A673 (cell line): ENCODE measurements at regions of chr3 and their contacts with region 1.

Region 1: DNA sequence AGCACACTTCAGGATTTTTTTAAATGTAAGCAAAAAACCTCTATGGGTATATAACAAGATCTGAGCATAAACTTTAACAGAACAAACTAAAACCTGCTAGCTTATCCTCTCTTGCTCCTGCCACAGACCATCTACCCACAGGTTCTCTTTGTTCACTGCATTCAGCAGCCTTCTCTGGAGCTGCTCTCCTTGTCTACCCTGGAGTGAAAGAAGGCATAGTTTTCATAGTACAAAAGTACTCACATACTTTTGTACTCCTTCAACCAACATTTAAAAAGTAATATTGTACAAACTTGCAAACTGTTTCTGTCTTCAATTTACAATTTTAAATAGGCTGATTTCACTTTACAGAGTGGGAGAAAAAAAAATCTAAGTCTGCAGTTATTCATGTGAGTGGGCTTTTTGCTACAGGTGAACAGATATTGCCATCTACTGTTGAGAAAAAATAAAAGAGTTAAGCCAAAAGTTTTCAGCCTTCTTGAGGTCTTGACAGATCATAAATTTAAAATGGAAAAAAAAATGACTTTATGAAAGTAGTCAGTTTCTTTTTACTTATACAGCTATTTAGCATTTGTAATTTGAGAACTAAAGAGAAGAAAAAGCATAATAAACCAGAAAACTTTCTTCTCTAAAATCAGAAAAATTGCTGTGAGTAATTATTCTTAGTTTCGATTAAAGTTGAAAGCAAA is 20.4 kb downstream of the TERC start:
- DNase-seq: peak; percentile 14
- H3K4me3 ChIP-seq: no peak overlapping the region
- H3K27ac ChIP-seq: no peak overlapping the region
- H3K4me1 ChIP-seq: no peaks in the 10 kb centered on the region
- H3K27me3 ChIP-seq: peaks cover 35% of the 10 kb centered on the region
- CTCF ChIP-seq: peak; percentile 50

Region 2: DNA sequence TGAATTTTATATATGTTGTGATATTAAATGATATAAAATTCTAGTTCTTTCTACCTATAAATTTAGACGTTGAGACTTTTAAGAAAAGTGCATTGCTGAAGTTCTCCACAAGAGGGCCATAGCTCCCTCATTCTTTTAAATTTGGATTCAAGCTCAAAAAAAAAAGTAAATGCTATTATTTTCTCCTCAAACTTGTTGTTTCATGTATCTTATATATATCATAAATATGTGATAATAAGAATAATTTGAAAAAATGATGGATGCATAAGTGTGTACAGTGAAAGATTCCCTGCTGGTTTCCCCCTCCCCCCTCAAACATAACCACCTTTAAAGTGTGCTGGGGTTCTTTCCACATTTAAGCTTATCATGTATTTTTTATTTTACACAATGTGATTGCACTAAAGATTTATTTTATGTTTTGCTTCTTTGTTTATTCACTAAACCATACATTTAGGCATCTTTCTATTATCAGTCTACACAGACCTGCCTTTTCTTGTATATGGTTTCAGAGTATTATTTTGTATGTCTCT is 879.4 kb before region 1 on chr3:
- CTCF ChIA-PET with region 1: interaction called, 4 read pairs
- POLR2A ChIA-PET with region 1: no interaction called
- intact Hi-C with region 1: loop called (anchors 5 kb)
- DNase-seq: peak; percentile 24
- H3K4me3 ChIP-seq: no peak overlapping the region
- H3K27ac ChIP-seq: no peak overlapping the region
- H3K4me1 ChIP-seq: no peaks in the 10 kb centered on the region
- H3K27me3 ChIP-seq: peaks cover 81% of the 10 kb centered on the region
- CTCF ChIP-seq: peak; percentile 81

Region 3: DNA sequence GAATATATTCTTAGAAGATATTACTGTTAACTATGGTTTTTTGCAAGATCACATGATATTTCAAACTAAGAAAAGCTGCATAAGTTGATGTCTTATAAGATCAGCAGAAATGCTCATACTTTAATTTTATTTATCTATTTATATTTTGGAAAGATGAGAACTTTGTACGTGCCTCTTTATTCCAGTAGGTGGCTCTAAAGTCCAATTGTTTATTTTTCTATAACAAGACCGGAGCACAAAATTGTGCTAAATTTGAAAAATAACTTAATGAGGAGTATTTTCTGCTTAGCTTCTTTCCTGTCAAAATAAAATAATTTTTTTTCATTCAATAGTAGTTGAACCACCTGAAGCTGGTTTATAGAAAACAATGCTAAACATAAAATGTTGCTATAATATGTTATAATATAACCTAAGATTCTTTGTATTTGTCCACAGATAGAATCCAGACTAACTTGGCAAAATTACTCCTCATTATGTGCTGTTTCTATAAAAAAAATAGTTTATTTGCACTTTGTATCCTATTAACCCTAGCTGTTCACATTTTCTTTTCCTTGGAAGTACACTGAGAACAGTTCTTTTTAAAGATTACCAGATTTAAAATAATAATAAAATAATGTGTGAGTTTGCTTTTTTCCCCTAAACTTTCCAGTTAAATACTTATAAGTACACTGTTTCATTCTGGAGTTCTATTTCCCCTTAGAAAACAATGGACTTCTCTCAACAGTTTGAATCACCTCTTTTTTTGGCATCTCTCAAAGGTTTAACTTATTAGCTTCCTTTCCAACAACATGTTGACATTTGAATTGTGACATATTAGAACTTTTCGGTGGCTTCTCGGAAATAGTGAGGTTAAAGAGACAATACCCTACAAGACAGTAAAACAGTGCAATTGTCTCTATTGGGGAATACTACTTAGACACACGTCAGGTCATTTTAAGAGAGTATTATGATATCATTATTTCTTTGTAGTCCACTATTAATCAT is 611.0 kb before region 1 on chr3:
- CTCF ChIA-PET with region 1: no interaction called
- POLR2A ChIA-PET with region 1: no interaction called
- intact Hi-C with region 1: loop called (anchors 5 kb)
- DNase-seq: peak; percentile 31
- H3K4me3 ChIP-seq: no peak overlapping the region
- H3K27ac ChIP-seq: no peak overlapping the region
- H3K4me1 ChIP-seq: no peaks in the 10 kb centered on the region
- H3K27me3 ChIP-seq: peaks cover 79% of the 10 kb centered on the region
- CTCF ChIP-seq: peak; percentile 58; the same call in 1 of the 2 replicates

Region 4: GRCh38 chr3:169149349-169149890 is 595.1 kb before region 1 on chr3:
- CTCF ChIA-PET with region 1: no interaction called
- POLR2A ChIA-PET with region 1: no interaction called
- intact Hi-C with region 1: loop called (anchors 5 kb)
- DNase-seq: peak; percentile 84
- H3K4me3 ChIP-seq: peak overlapping the region; percentile 18
- H3K27ac ChIP-seq: no peak overlapping the region
- H3K4me1 ChIP-seq: peaks cover 12% of the 10 kb centered on the region
- H3K27me3 ChIP-seq: peaks cover 96% of the 10 kb centered on the region
- CTCF ChIP-seq: peak; percentile 87

Region 5: DNA sequence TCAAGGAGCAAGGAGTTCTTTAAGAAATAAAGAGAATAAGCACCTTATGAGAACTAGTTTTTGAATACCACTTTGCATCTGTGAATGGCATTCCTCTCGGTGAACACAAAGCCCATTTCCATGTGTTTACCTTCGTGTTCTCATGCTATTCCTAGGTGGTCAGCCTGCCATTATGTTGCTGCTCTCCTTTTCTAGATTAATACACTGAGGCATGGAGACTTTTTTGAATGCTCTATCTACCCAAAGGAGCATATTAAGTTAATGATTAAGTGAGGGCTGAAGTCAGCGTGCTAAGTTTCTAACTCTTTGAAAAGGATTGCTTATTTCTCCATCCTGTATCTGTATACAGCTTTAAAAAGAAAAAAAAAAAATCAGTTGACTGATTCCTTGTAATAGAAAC is 475.5 kb before region 1 on chr3:
- CTCF ChIA-PET with region 1: no interaction called
- POLR2A ChIA-PET with region 1: no interaction called
- intact Hi-C with region 1: no loop called
- DNase-seq: no peak
- H3K4me3 ChIP-seq: no peak overlapping the region
- H3K27ac ChIP-seq: no peak overlapping the region
- H3K4me1 ChIP-seq: peaks cover 16% of the 10 kb centered on the region
- H3K27me3 ChIP-seq: no peaks in the 10 kb centered on the region
- CTCF ChIP-seq: no peak

Region 6: GRCh38 chr3:169512991-169513390 is 231.5 kb before region 1 on chr3:
- CTCF ChIA-PET with region 1: no interaction called
- POLR2A ChIA-PET with region 1: no interaction called
- intact Hi-C with region 1: no loop called
- DNase-seq: no peak
- H3K4me3 ChIP-seq: no peak overlapping the region
- H3K27ac ChIP-seq: no peak overlapping the region
- H3K4me1 ChIP-seq: no peaks in the 10 kb centered on the region
- H3K27me3 ChIP-seq: peaks cover 8% of the 10 kb centered on the region
- CTCF ChIP-seq: no peak